GM10248 (cell line): ENCODE measurements at regions of chr6 and their contacts with region 1.

Region 1: GRCh38 chr6:99868074-99868702 is 125.8 kb downstream of the MCHR2 start:
- DNase-seq: peak; percentile 47
- CTCF ChIP-seq: peak; percentile 79

Region 2: GRCh38 chr6:99563056-99563723 is 305.0 kb before region 1 on chr6:
- CTCF ChIA-PET with region 1: no interaction called
- POLR2A ChIA-PET with region 1: no interaction called
- DNase-seq: no peak
- CTCF ChIP-seq: no peak

Region 3: DNA sequence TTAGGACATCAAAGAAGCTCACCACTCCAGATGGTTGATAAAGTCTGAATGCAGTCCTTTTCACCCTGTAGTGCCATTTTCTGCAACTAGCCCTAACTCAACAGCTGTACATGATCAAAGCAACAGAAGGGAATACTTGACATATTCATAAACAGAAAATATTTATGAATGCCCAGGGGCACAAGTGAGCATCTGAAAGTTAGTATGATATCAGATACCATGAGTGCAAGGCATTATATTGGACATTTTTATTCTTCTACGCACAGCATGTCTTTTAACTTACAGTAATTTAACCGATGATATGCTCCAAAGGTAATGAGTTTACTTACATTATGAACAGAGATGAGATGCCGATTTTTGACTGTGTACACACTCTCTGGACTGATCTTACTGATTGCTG is 16.2 kb before region 1 on chr6:
- CTCF ChIA-PET with region 1: interaction called, 20 read pairs
- POLR2A ChIA-PET with region 1: no interaction called
- DNase-seq: no peak
- CTCF ChIP-seq: no peak

Region 4: DNA sequence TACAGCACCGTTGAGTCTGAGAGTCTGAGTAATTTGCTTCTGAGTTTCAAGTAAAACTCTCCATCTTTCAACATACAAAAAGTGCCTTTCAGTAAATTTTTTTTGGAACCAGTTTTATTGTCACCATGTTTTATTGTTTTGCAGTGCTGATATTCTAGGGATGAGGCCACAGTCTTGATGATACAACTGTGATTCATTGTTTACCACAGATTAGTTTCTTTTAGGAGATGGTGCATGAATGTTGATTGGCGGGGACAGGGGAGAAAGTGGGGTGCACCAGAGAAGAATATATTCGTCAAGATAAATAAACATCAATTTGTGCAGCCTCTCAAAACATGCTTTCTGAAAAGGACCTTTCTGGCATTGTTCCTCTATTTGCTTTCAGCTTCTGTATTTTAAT is 16.9 kb after region 1 on chr6:
- CTCF ChIA-PET with region 1: interaction called, 34 read pairs
- POLR2A ChIA-PET with region 1: no interaction called
- DNase-seq: no peak
- CTCF ChIP-seq: no peak

Region 5: GRCh38 chr6:100001915-100002388 is 133.8 kb after region 1 on chr6:
- CTCF ChIA-PET with region 1: interaction called, 19 read pairs
- POLR2A ChIA-PET with region 1: no interaction called
- DNase-seq: peak; percentile 52
- CTCF ChIP-seq: peak; percentile 95

Region 6: DNA sequence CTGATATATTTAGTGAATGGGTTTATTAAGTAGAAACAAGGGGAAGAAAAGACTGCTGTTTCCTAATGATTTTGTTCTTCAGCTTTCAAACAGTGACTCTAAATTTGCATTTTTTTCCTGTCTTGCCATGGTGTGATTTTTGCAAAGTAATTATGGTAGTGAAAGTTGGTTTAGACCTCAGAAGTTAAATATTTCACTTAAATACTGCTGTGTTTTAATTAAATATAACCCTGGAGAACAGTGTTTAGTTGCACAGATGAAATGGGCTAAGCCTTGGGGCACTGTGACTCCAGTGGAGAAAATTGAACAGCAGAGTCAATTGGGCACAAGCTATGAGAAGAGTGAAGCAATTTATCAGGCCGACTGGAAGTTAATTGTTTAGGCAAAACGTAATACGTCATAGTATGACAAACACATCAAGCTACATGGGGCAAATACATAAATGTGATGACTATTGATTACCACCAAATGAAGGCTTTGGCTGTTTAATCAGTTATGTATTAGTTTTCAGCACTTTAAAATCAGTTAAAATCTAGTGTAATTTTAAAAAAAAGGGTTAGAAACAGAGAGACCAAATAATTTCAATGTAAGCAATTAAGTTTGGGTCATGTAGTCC is 237.1 kb after region 1 on chr6:
- CTCF ChIA-PET with region 1: interaction called, 111 read pairs
- POLR2A ChIA-PET with region 1: no interaction called
- DNase-seq: no peak
- CTCF ChIP-seq: no peak